ENCODE measurements at regions of chr7 and their contacts with region 1.

Region 1: DNA sequence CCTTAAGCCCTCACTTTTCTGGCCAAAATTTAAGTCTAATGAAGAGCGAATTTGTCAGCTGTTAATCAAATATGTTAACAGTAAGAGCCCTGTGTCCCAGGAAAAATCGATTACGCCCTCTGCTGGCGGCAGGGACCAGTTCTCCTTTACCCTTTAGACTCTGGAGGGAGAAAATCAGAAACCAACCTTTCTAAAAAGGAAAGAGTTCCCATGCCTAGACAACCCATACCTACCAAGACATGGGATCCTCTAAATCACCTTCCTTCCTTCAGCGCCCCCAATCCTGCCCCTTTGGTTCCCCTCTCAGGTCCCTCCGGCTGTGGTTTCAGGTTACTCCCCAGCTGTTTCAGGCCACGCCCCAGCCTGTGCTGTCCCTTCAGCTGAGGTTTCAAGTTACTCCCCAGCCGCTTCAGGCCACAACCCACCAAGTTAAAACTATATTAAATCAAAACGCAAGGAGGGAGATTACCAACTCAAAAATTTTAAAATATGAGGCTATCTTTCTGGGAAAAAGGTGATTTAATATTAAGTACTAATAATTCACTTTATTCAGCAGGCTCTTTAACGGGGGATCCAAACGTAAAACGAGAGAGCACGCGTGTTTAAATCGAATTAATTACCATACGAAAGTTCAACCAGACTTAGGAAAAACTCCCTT is 1.4 kb upstream of the AKR1B15 start:
- DNase-seq: peak; percentile 60
- H3K4me3 ChIP-seq: peak overlapping the region; percentile 37 to 57
- H3K27ac ChIP-seq: no peak overlapping the region
- H3K4me1 ChIP-seq: peaks cover 0 to 4% of the 10 kb centered on the region in 2 experiments; a peak in 1 of 4 replicates
- H3K27me3 ChIP-seq: peaks cover 57% of the 10 kb centered on the region
- CTCF ChIP-seq: peak; percentile 100
- EP300 ChIP-seq: no peak
- RAD21 ChIP-seq: peak; percentile 68

Region 2: DNA sequence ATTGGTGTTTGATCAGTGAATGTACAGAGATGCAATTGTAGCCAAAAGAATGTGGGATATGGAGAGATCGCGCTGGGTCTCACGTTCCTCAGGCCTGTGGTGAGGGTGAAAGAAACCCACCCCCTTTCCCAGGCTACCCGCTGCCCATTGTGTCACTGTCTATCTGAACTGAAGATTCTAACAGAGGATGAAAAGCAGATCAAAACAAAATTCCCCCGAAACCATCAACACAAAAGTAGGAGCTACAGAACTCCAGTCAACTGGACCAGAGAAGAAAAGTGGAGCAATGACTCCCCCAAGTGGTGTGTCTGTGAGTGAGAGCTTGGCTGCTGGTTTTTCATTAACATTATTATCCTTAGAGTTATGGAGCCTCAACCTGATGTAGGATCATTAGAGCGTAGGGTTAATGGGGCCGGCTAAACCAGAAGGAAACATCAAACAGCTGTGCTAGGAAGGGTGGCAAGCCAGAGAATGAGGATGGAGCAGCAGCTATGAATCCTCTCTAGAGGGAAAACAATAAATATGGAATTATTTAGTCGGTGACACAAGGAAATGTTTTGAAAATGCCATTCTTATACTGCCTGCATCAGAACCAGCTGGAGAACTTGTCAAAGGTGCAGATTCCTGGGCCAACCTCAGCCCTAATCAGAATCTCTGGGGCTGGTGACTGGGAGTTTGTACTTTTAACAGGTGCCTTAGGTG is 127.0 kb before region 1 on chr7:
- CTCF ChIA-PET with region 1: interaction called, 11 read pairs
- POLR2A ChIA-PET with region 1: no interaction called
- DNase-seq: peak; percentile 77
- H3K4me3 ChIP-seq: peak overlapping the region in 1 of 2 experiments; percentile 19; a peak in 1 of 4 replicates
- H3K27ac ChIP-seq: peak overlapping the region in 1 of 2 experiments; percentile 30; a peak in 2 of 4 replicates
- H3K4me1 ChIP-seq: peaks cover 0 to 7% of the 10 kb centered on the region in 2 experiments; a peak in 1 of 4 replicates
- H3K27me3 ChIP-seq: no peaks in the 10 kb centered on the region
- CTCF ChIP-seq: peak; percentile 86
- EP300 ChIP-seq: peak in 1 of 2 experiments; percentile 47; a peak in 2 of 4 replicates
- RAD21 ChIP-seq: peak; percentile 95

Region 3: GRCh38 chr7:134509010-134509409 is 38.5 kb before region 1 on chr7:
- CTCF ChIA-PET with region 1: interaction called, 28 read pairs
- POLR2A ChIA-PET with region 1: no interaction called
- DNase-seq: no peak
- H3K4me3 ChIP-seq: no peak overlapping the region
- H3K27ac ChIP-seq: no peak overlapping the region
- H3K4me1 ChIP-seq: no peaks in the 10 kb centered on the region
- H3K27me3 ChIP-seq: 0 out of 2 replicates have a peak, but pooled peaks cover 16% of the 10 kb centered on the region
- CTCF ChIP-seq: no peak
- EP300 ChIP-seq: no peak
- RAD21 ChIP-seq: no peak

Region 4: DNA sequence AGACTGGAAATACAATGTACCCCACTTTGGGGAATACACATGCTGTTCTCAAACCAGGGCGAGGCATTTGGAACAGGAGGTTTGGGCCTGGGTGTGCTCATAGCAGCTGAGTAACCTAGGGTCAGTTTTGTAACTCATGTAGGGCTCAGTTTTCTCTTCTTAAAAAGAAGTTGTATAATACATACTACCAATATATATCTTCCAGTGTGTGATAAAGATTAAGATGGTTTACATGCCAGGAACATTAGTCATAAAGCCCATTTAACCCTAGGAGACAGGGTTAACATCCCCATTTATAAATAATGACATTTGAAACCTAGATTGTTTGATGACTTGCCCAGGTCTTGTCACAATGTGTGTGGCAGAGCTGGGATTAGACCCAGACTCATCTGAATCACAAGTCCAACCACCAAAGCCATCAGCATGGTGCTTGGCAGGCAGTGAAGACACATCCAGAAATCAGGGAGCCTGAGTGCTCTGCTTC is 14.2 kb before region 1 on chr7:
- CTCF ChIA-PET with region 1: interaction called, 24 read pairs
- POLR2A ChIA-PET with region 1: no interaction called
- DNase-seq: no peak
- H3K4me3 ChIP-seq: no peak overlapping the region
- H3K27ac ChIP-seq: no peak overlapping the region
- H3K4me1 ChIP-seq: no peaks in the 10 kb centered on the region
- H3K27me3 ChIP-seq: peaks cover 25% of the 10 kb centered on the region; the same call in 1 of the 2 replicates
- CTCF ChIP-seq: no peak
- EP300 ChIP-seq: no peak
- RAD21 ChIP-seq: no peak

Region 5: DNA sequence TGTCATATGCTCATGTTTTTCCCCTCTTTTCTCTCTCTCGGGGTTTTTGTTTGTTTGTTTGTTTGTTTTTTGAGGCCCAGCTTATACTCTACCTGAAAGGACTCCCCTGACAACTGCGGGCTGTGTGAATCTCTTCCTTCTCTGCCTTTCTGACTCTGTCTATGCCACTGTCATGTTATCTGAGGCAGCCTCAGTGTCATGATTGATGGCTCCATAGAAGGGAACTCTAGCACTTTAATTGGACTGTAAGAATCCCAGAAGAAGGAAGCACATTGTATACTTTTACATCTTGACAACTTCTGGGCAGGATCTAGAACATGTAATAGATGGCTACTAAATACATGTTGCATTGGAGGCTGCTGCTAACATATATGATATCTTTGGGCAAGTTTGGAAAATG is 26.8 kb after region 1 on chr7:
- CTCF ChIA-PET with region 1: interaction called, 12 read pairs
- POLR2A ChIA-PET with region 1: no interaction called
- DNase-seq: no peak
- H3K4me3 ChIP-seq: no peak overlapping the region
- H3K27ac ChIP-seq: no peak overlapping the region
- H3K4me1 ChIP-seq: no peaks in the 10 kb centered on the region
- H3K27me3 ChIP-seq: peaks cover 26% of the 10 kb centered on the region; the same call in 1 of the 2 replicates
- CTCF ChIP-seq: no peak
- EP300 ChIP-seq: no peak
- RAD21 ChIP-seq: no peak

Measured in SK-N-SH (cell line).